Activated CD8-positive, alpha-beta memory T cell treated with anti-CD3 and anti-CD28 coated beads, Interleukin-2, amount 10 ng/mL, durations not matched to agents 7 days and 5 days (primary cell): ENCODE measurements at regions of chr14 and their contacts with region 1.

Region 1: DNA sequence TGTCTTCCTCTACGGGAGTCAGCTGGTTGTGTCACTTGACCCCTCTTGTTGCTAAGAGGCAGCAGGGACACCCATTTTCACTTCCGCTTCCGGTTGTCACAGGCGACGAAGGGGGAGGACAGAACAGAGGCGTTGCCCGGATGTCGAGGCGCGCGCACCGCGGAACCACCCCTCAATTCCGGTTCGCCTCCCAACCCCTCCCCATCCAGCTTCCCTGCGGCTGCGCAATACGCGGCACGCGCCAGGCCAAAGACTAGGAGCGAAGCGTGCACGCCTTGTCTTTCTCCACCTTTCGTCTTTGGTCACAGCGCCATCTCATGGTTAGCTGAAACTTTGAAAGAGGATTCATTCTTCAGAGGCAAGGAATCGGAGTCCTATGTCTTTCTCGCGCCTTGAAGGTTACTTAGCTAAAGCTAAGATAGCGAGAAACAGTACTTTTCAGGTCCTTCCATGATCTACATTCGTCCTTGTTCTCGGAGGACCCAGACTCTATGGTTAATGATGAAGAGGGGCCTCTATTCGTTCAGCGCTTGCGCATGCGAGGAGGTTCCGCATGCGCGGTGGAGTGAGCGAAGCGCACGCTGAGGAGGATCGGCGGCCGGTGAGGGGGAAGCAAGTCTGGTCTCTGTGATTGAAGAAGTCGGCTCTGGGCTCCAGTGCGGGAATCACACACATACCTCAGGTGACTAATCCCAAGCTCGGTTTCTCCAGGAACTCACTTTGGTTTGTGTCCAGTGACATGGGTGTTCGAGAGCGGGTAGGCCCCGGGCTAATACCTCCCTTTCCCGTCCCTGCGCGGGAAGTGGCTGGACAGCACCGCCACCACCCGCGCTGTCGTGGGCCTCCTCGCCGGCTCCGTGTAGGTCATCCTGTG is at the starts of genes ATP6V1D and EIF2S1:
- DNase-seq: peak; percentile 100
- ATAC-seq: peak; percentile 92
- H3K4me3 Mint-ChIP-seq: peak within 1 kb of the TSS; percentile 99
- H3K27ac Mint-ChIP-seq: peak within 1 kb of the TSS; percentile 93
- H3K4me1 Mint-ChIP-seq: peaks cover 67% of the 10 kb centered on the region
- H3K27me3 Mint-ChIP-seq: no peaks in the 10 kb centered on the region
- total RNA-seq, gene ATP6V1D: 32.4 to 33.5 TPM
- total RNA-seq, gene EIF2S1: 145 to 189 TPM

Region 2: DNA sequence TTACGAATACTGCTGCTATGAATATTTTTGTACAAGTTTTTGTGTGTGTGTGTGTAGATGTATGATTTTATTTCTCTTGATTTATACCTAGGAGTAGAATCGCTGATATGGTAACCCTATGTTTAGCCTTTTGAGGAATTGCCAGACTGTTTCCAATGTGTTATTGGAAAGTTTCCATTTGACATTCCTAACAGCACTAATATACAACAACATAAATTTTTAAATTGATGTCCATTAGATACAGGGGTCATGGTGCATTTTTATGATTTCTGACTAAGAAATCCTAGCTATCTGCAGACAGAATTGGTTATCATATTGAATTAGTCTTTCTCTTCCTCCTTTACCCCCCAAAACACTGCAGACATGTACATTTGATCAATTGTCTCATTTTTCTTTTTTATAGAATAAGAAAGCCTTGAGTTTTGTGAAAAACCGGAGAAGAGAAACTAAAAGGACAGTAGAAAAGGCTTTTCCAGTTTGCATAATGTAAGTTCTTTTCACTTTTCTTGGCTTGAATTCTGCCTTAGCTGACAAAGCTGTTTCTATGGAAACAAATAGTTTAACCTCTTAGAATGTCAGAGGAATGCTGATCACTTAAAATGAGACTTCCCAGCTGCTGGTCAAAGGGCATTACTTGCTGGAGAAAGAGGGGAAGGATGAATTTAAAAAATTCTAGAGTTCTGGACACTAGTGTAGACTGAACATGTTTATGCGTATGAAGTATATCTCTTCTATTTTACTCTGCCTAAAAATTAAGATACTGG is 90.5 kb before region 1 on chr14:
- CTCF ChIA-PET with region 1: no interaction called
- DNase-seq: no peak
- ATAC-seq: no peak
- H3K4me3 Mint-ChIP-seq: no peak overlapping the region
- H3K27ac Mint-ChIP-seq: no peak overlapping the region
- H3K4me1 Mint-ChIP-seq: peaks cover 10% of the 10 kb centered on the region
- H3K27me3 Mint-ChIP-seq: no peaks in the 10 kb centered on the region

Region 3: GRCh38 chr14:67373347-67373746 is 13.3 kb after region 1 on chr14:
- CTCF ChIA-PET with region 1: interaction called, 11 read pairs
- DNase-seq: no peak
- ATAC-seq: peak; percentile 61
- H3K4me3 Mint-ChIP-seq: no peak overlapping the region
- H3K27ac Mint-ChIP-seq: no peak overlapping the region
- H3K4me1 Mint-ChIP-seq: peaks cover 38% of the 10 kb centered on the region
- H3K27me3 Mint-ChIP-seq: no peaks in the 10 kb centered on the region

Region 4: GRCh38 chr14:67446120-67447032 is 86.4 kb after region 1 on chr14:
- CTCF ChIA-PET with region 1: no interaction called
- DNase-seq: no peak
- ATAC-seq: no peak
- H3K4me3 Mint-ChIP-seq: no peak overlapping the region
- H3K27ac Mint-ChIP-seq: no peak overlapping the region
- H3K4me1 Mint-ChIP-seq: no peaks in the 10 kb centered on the region
- H3K27me3 Mint-ChIP-seq: peaks cover 50% of the 10 kb centered on the region